AG04449 (cell line): ENCODE measurements at regions of chr17 and their contacts with region 1.

Region 1: GRCh38 chr17:60577147-60577915 is 22.7 kb upstream of the PPM1D start:
- DNase-seq: no peak
- H3K4me3 ChIP-seq: peak overlapping the region; percentile 46
- CTCF ChIP-seq: peak; percentile 10

Region 2: DNA sequence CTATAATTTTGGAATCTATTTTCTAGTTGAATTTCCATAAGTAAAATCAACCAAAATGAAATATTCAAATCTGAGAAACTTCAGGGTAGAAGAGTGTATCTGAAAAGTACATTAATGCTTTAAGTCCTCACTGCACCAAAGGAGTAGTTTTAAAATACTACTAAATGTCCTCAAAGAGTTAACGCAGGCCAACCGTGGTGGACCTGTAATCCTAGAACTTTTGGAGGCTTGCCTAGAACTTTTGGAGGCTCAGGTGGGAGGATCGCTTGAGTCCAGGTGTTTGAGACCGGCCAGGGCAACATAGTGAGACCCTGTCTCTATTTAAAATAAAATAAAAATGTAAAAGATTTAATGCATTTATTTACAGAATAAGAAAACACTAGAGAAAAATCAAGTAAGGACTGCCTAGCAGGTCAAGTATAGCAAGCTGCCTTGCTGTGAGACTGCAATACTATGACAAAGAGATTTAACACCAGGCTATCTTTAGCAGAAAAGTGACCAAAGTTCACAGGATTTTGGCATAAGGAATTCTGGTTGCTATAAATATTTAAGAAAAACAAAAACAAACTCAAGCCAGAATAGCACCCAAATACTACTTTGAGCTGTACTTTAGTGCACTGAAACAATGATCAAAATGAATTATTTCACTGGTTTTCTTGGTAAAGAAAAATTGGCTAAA is 114.0 kb before region 1 on chr17:
- CTCF ChIA-PET with region 1: no interaction called
- POLR2A ChIA-PET with region 1: no interaction called
- DNase-seq: no peak
- H3K4me3 ChIP-seq: no peak overlapping the region
- CTCF ChIP-seq: no peak

Region 3: DNA sequence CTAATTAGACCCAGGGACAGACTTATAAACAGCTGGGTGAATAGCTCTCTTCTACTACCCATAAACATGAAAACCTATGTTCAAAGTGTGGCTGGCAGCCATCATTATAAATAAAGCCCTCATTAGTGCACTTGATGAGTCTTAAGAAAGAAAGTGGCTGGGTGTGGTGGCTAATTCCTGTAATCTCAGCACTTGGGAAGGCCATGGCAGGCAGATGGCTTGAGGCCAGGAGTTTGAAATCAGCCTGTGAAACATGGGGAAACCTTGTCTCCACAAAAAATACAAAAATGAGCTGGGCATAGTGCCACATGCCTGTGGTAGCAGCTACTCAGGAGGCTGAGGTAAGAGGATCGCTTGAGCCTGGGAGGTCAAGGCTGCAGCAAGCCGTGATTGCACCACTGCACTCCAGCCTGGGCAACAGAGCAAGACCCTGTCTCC is 23.0 kb before region 1 on chr17:
- CTCF ChIA-PET with region 1: interaction called, 8 read pairs
- POLR2A ChIA-PET with region 1: interaction called, 10 read pairs
- DNase-seq: peak; percentile 78
- H3K4me3 ChIP-seq: no peak overlapping the region
- CTCF ChIP-seq: no peak